Ovary (tissue), 10 donors: ENCODE measurements at regions of chr19 and their contacts with region 1.

Region 1: DNA sequence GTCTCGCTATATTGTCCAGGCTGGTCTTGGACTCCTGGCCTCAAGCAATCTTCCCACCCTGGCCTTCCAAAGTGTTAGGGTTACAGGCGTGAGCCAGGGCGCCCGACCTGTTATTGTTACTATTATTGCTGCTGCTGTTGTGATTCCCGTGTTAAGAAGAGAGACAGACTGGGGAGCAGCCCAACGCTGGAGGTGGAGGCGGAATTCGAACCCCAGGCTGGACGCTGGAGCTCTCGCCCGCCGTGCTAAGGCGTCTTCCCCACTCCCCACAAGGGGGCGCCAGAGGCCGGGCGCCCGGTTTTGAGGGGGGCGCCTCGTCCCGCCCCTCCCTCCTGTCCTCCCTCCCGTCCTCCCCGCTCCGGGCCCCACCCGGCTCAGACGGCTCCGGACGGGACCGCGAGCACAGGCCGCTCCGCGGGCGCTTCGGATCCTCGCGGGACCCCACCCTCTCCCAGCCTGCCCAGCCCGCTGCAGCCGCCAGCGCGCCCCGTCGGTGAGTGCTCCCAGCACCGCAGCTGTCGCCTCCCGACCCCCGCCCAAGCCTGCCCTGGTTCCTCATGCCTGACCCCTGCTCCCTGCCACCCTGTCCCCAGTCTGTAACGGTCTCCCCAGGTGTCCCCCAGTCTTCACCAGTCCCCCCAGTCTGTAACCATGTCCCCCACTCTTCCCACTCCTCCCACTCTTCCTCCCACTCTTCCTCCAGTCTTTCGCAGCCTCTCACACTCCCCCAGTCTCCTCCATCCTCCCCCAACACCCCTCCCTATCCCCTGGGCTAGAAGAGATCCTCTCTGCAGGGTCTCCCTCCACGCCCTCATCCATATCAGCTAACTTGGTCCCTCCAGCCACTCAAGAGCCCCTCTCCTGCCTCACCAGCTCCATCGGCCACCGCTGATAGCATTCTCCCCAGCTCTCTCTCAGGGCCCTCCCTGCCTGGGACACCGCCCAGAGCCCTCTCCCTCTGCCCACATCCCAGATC is at the start of gene EHD2:
- DNase-seq: peak; percentile 85 to 91 (median 90)
- H3K4me3 ChIP-seq: peak within 1 kb of the TSS; percentile 92
- H3K27ac ChIP-seq: peak within 1 kb of the TSS; percentile 73 to 88
- H3K4me1 ChIP-seq: peaks cover 25% of the 10 kb centered on the region
- H3K27me3 ChIP-seq: no peaks in the 10 kb centered on the region
- CTCF ChIP-seq: peak; percentile 98 to 99 (median 98)
- EP300 ChIP-seq: no peak
- POLR2A ChIP-seq: peak; percentile 78
- total RNA-seq, gene EHD2: 28.0 to 162 (median 129) TPM

Region 2: GRCh38 chr19:47608969-47609905 is 104.1 kb before region 1 on chr19 and contains the start of gene BICRA:
- intact Hi-C with region 1: no loop called
- DNase-seq: peak; percentile 82 to 91 (median 85)
- H3K4me3 ChIP-seq: peak within 1 kb of the TSS; percentile 79
- H3K27ac ChIP-seq: peak within 1 kb of the TSS; percentile 88 to 96
- H3K4me1 ChIP-seq: peaks cover 11% of the 10 kb centered on the region
- H3K27me3 ChIP-seq: no peaks in the 10 kb centered on the region
- CTCF ChIP-seq: no peak
- EP300 ChIP-seq: no peak
- POLR2A ChIP-seq: no peak
- total RNA-seq, gene BICRA: 3.7 to 21.7 (median 13.1) TPM

Region 3: DNA sequence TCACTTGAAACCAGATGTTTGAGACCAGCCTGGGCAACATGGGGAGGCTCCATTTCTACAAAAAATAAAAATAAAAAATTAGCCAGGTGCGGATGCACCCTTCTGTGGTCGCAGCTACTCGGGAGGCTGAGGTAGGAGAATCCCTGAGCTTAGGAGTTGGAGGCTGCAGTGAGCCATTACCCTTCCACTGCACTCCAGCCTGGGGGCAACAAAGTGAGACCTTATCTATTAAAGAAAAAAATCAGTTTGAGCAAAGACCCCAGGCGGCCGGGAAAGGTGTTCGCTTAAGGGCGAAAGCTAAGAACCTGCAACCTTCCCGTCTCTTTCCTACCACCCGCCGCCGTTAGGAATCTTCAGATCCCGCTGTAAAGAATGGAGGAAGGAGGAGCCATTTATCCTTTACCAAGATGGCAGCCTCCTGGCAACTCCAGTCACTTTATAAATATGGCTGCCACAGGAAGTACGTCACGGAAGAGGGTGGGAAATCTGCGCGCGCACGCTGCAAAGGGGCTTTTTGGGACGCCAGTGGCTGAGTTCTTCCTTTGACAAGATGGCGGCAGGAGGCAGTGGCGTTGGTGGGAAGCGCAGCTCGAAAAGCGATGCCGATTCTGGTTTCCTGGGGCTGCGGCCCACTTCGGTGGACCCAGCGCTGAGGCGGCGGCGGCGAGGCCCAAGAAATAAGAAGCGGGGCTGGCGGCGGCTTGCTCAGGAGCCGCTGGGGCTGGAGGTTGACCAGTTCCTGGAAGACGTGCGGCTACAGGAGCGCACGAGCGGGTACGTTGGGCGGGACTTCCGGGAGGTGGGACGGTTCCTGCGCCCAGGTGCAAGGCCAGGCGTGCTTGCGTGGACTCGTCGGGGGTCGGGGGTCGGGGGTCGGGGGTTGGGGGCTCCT is 31.9 kb after region 1 on chr19 and contains the start of gene NOP53:
- intact Hi-C with region 1: loop called (anchors 1 to 2 kb)
- DNase-seq: peak; percentile 96 to 99 (median 98)
- H3K4me3 ChIP-seq: peak within 1 kb of the TSS; percentile 96
- H3K27ac ChIP-seq: peak within 1 kb of the TSS; percentile 78 to 97
- H3K4me1 ChIP-seq: peaks cover 9% of the 10 kb centered on the region
- H3K27me3 ChIP-seq: no peaks in the 10 kb centered on the region
- CTCF ChIP-seq: peak in 2 of 3 donors; percentile 26 to 41
- EP300 ChIP-seq: no peak
- POLR2A ChIP-seq: peak; percentile 68
- total RNA-seq, gene NOP53: 645 to 985 (median 727) TPM

Region 4: DNA sequence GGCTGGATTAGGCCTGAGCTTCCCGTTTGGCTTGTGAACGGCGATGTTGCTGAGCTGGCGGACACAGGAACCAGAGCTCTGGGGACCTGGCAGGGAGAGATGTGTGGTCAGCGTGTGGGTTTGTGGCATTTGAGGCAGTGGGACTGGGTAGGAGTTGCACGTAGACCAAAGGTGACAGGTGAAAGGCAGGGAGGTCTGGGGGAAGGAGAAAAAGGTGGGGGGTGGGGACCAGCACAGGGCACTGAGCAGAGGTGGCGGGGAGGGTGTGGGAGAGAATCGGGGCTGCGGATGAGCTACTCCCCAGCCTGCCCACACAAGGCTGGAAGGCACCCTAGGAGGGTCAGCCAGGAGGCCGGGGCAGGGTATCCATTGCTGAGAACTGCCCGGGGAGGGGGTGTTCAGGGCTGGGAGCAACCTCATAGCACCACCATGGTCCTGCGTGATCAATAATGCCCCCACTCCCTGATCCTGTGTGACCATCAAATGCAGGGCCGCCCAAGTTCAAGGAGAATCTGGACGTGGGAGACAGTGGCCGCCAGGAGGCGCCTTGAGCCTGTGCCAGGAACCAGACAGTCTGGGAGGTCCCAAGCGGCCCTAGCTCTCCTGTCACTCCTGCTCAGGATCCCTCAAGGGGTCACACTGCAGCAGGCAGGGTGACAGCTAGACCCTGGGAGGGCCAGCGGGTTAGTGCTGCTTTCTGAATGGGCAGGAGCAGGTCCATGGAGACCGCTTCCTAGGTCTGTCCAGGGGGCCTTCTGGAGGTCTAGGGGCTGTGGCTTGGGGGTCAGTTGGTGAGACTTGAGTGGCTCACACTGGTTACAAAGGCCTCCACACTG is 52.4 kb after region 1 on chr19:
- intact Hi-C with region 1: no loop called
- DNase-seq: peak; percentile 44 to 78 (median 63)
- H3K4me3 ChIP-seq: no peak overlapping the region
- H3K27ac ChIP-seq: no peak overlapping the region
- H3K4me1 ChIP-seq: peaks cover 3% of the 10 kb centered on the region
- H3K27me3 ChIP-seq: no peaks in the 10 kb centered on the region
- CTCF ChIP-seq: peak; percentile 44 to 52 (median 50)
- EP300 ChIP-seq: no peak
- POLR2A ChIP-seq: no peak